Vagina (tissue), 2 donors: ENCODE measurements at regions of chr15 and their contacts with region 1.

Region 1: DNA sequence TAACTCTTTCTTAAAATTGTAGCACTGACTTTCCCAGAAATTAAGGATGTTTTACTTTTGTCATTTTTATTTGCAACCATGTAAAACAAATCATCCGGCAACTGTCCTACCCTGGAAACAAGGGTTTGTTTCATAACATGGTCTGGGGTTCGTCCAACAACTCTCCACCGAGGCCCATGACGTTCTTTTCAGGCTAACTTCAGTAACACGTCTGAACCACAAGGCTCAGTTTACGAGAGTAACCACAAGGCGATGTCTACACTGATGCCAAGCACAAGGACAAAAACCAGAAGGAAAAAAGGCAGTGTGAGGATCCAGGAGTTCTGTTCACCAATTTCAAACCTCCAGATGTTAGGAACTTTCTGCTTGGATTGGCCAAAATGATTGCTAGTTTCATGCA is 546.1 kb downstream of the NTRK3 start:
- DNase-seq: peak in 1 of 2 donors; percentile 91
- H3K4me3 ChIP-seq: no peak overlapping the region
- H3K27ac ChIP-seq: no peak overlapping the region
- H3K4me1 ChIP-seq: no peaks in the 10 kb centered on the region
- H3K27me3 ChIP-seq: no peaks in the 10 kb centered on the region
- CTCF ChIP-seq: no peak
- POLR2A ChIP-seq: no peak

Region 2: GRCh38 chr15:87623832-87624231 is 86.6 kb before region 1 on chr15:
- intact Hi-C with region 1: loop called (anchors 5 kb)
- DNase-seq: no peak
- H3K4me3 ChIP-seq: no peak overlapping the region
- H3K27ac ChIP-seq: no peak overlapping the region
- H3K4me1 ChIP-seq: no peaks in the 10 kb centered on the region
- H3K27me3 ChIP-seq: no peaks in the 10 kb centered on the region
- CTCF ChIP-seq: no peak
- POLR2A ChIP-seq: no peak

Region 3: GRCh38 chr15:87778358-87778757 is 68.0 kb after region 1 on chr15:
- intact Hi-C with region 1: no loop called
- DNase-seq: no peak
- H3K4me3 ChIP-seq: no peak overlapping the region
- H3K27ac ChIP-seq: no peak overlapping the region
- H3K4me1 ChIP-seq: no peaks in the 10 kb centered on the region
- H3K27me3 ChIP-seq: no peaks in the 10 kb centered on the region
- CTCF ChIP-seq: no peak
- POLR2A ChIP-seq: no peak